ENCODE measurements at regions of chr1 and their contacts with region 1.

Region 1: GRCh38 chr1:101238681-101239094 is 1.9 kb downstream of the S1PR1 start:
- DNase-seq: peak; percentile 80 to 87 (median 82)
- H3K4me3 ChIP-seq: peak overlapping the region; percentile 94 to 97
- H3K4me3 Mint-ChIP-seq: peak overlapping the region; percentile 96 to 100 (median 98)
- H3K27ac ChIP-seq: peak overlapping the region; percentile 90
- H3K27ac Mint-ChIP-seq: peak overlapping the region; percentile 97 to 100 (median 98)
- H3K4me1 ChIP-seq: peaks cover 66% of the 10 kb centered on the region
- H3K4me1 Mint-ChIP-seq: peaks cover 37 to 92% (median 50%) of the 10 kb centered on the region in 4 donors
- H3K27me3 ChIP-seq: no peaks in the 10 kb centered on the region
- H3K27me3 Mint-ChIP-seq: no peaks in the 10 kb centered on the region

Region 2: GRCh38 chr1:100921109-100921706 is 317.5 kb before region 1 on chr1:
- CTCF ChIA-PET with region 1: interaction called, 129 read pairs
- POLR2A ChIA-PET with region 1: interaction called, 335 read pairs
- intact Hi-C with region 1: loop called (anchors 1 kb)
- DNase-seq: peak in 4 of 5 donors; percentile 48 to 66 (median 60)
- H3K4me3 ChIP-seq: no peak overlapping the region
- H3K4me3 Mint-ChIP-seq: peak overlapping the region in 3 of 8 donors; percentile 24 to 67 (median 39)
- H3K27ac ChIP-seq: no peak overlapping the region
- H3K27ac Mint-ChIP-seq: peak overlapping the region; percentile 61 to 91 (median 82)
- H3K4me1 ChIP-seq: peaks cover 39% of the 10 kb centered on the region
- H3K4me1 Mint-ChIP-seq: peaks cover 25 to 61% (median 38%) of the 10 kb centered on the region in 4 donors
- H3K27me3 ChIP-seq: no peaks in the 10 kb centered on the region
- H3K27me3 Mint-ChIP-seq: no peaks in the 10 kb centered on the region

Region 3: GRCh38 chr1:100989306-100990077 is 249.2 kb before region 1 on chr1:
- CTCF ChIA-PET with region 1: interaction called, 6 read pairs
- POLR2A ChIA-PET with region 1: interaction called, 13 read pairs
- intact Hi-C with region 1: no loop called
- DNase-seq: no peak
- H3K4me3 ChIP-seq: no peak overlapping the region
- H3K4me3 Mint-ChIP-seq: no peak overlapping the region
- H3K27ac ChIP-seq: no peak overlapping the region
- H3K27ac Mint-ChIP-seq: peak overlapping the region in 1 of 7 donors; percentile 36
- H3K4me1 ChIP-seq: peaks cover 2% of the 10 kb centered on the region
- H3K4me1 Mint-ChIP-seq: peaks cover 10 to 25% (median 10%) of the 10 kb centered on the region in 4 donors
- H3K27me3 ChIP-seq: no peaks in the 10 kb centered on the region
- H3K27me3 Mint-ChIP-seq: no peaks in the 10 kb centered on the region

Region 4: GRCh38 chr1:101112051-101112780 is 126.5 kb before region 1 on chr1:
- CTCF ChIA-PET with region 1: interaction called, 17 read pairs
- POLR2A ChIA-PET with region 1: interaction called, 128 read pairs
- intact Hi-C with region 1: loop called (anchors 1 kb)
- DNase-seq: peak; percentile 84 to 91 (median 88)
- H3K4me3 ChIP-seq: peak overlapping the region in 1 of 2 donors; percentile 3
- H3K4me3 Mint-ChIP-seq: peak overlapping the region; percentile 52 to 87 (median 70)
- H3K27ac ChIP-seq: peak overlapping the region; percentile 60
- H3K27ac Mint-ChIP-seq: peak overlapping the region; percentile 91 to 100 (median 98)
- H3K4me1 ChIP-seq: peaks cover 42% of the 10 kb centered on the region
- H3K4me1 Mint-ChIP-seq: peaks cover 39 to 51% (median 47%) of the 10 kb centered on the region in 4 donors
- H3K27me3 ChIP-seq: no peaks in the 10 kb centered on the region
- H3K27me3 Mint-ChIP-seq: no peaks in the 10 kb centered on the region

Region 5: GRCh38 chr1:101178688-101179491 is 59.8 kb before region 1 on chr1:
- CTCF ChIA-PET with region 1: interaction called, 6 read pairs
- POLR2A ChIA-PET with region 1: interaction called, 14 read pairs
- intact Hi-C with region 1: loop called (anchors 2 kb)
- DNase-seq: peak; percentile 20 to 42 (median 26)
- H3K4me3 ChIP-seq: peak overlapping the region in 1 of 2 donors; percentile 18
- H3K4me3 Mint-ChIP-seq: peak overlapping the region; percentile 54 to 84 (median 75)
- H3K27ac ChIP-seq: peak overlapping the region; percentile 7
- H3K27ac Mint-ChIP-seq: peak overlapping the region; percentile 84 to 97 (median 86)
- H3K4me1 ChIP-seq: peaks cover 23% of the 10 kb centered on the region
- H3K4me1 Mint-ChIP-seq: peaks cover 20 to 45% (median 24%) of the 10 kb centered on the region in 4 donors
- H3K27me3 ChIP-seq: no peaks in the 10 kb centered on the region
- H3K27me3 Mint-ChIP-seq: no peaks in the 10 kb centered on the region

Region 6: GRCh38 chr1:101257500-101258325 is 19.0 kb after region 1 on chr1:
- CTCF ChIA-PET with region 1: interaction called, 79 read pairs
- POLR2A ChIA-PET with region 1: interaction called, 205 read pairs
- intact Hi-C with region 1: no loop called
- DNase-seq: peak; percentile 48 to 68 (median 56)
- H3K4me3 ChIP-seq: no peak overlapping the region
- H3K4me3 Mint-ChIP-seq: peak overlapping the region; percentile 26 to 78 (median 70)
- H3K27ac ChIP-seq: peak overlapping the region; percentile 8
- H3K27ac Mint-ChIP-seq: peak overlapping the region; percentile 73 to 92 (median 88)
- H3K4me1 ChIP-seq: peaks cover 58% of the 10 kb centered on the region
- H3K4me1 Mint-ChIP-seq: peaks cover 54 to 72% (median 65%) of the 10 kb centered on the region in 4 donors
- H3K27me3 ChIP-seq: no peaks in the 10 kb centered on the region
- H3K27me3 Mint-ChIP-seq: no peaks in the 10 kb centered on the region

Region 7: GRCh38 chr1:101309334-101310311 is 70.9 kb after region 1 on chr1:
- CTCF ChIA-PET with region 1: interaction called, 16 read pairs
- POLR2A ChIA-PET with region 1: interaction called, 28 read pairs
- intact Hi-C with region 1: no loop called
- DNase-seq: peak; percentile 86 to 92 (median 89)
- H3K4me3 ChIP-seq: peak overlapping the region; percentile 9 to 55
- H3K4me3 Mint-ChIP-seq: peak overlapping the region; percentile 80 to 88 (median 86)
- H3K27ac ChIP-seq: peak overlapping the region; percentile 79
- H3K27ac Mint-ChIP-seq: peak overlapping the region; percentile 97 to 99 (median 98)
- H3K4me1 ChIP-seq: peaks cover 56% of the 10 kb centered on the region
- H3K4me1 Mint-ChIP-seq: peaks cover 50 to 78% (median 63%) of the 10 kb centered on the region in 4 donors
- H3K27me3 ChIP-seq: no peaks in the 10 kb centered on the region
- H3K27me3 Mint-ChIP-seq: no peaks in the 10 kb centered on the region